GM12878 (cell line): ENCODE measurements at regions of chr11 and their contacts with region 1.

Region 1: DNA sequence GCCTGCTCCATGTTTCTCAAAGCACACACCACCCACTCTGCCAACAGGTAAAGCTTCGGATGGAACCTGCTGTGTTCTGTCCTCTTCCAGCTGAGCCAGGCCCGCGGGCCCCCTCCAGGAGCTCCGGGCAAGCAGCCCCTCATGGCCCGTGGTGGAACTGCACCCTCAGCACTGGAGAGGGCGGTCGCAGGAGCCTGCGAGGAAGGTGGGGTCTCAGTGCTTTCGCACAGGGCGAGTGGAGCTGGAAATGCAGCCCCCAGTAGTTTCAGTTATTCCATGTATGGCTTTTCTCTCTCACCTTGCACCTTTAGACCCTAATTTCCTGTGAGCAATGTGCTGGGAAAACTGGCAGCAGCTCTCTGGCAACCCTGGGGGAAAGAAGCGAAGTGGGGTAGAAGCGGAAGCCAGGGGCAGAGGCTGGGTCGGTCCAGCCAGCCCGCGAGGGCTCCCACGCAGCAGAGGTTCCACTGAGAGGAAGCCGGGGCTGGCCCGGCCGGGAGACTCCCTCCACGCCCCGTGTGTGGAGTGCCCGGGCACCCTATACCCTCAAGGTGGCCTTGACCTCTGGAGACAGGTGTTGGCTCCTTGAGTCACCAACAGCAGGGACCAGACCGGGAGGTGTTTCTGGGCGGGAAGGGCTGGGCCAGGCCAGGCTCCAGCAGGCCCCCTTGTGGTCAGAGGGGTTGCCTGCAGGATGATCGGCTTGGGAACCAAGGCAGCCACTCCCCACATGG is 119.9 kb upstream of the TMEM45B start:
- DNase-seq: no peak
- ATAC-seq: peak; percentile 92
- H3K4me3 ChIP-seq: no peak overlapping the region
- H3K27ac ChIP-seq: no peak overlapping the region
- H3K4me1 ChIP-seq: 0 out of 2 replicates have a peak, but pooled peaks cover 2% of the 10 kb centered on the region
- H3K27me3 ChIP-seq: no peaks in the 10 kb centered on the region
- CTCF ChIP-seq: peak; percentile 50 to 77 (median 61)
- EP300 ChIP-seq: no peak
- POLR2A ChIP-seq: no peak
- RAD21 ChIP-seq: peak; percentile 36

Region 2: DNA sequence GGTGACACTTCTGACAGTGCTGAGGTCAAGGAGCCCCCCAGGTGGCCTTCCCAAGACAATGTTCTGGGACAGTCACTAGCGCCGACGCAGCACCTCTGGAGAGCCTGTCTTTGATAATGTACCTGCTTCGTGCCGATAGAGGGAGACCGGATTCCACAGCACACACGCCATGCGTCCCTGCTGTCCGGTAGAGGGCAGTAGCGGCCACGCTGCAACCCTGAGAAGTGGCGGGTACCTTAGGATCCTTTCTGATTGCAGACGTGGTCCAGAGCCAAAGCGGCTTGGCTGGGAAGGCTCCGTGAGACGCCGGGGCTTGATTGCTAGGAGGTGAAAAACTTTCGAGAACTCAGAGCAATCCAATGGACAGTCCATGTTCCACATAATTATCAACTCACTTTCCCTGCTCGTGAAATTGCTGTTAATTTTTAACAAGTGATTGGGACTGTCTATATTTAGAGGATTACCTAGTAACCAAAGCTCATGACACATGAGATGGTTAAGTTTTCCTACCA is 331.5 kb before region 1 on chr11:
- CTCF ChIA-PET with region 1: interaction called, 8 read pairs
- POLR2A ChIA-PET with region 1: no interaction called
- RAD21 ChIA-PET with region 1: interaction called, 3 read pairs
- SMC1A ChIA-PET with region 1: no interaction called
- in situ Hi-C with region 1: no loop called
- intact Hi-C with region 1: loop called (anchors 1 kb)
- DNase-seq: peak; percentile 45
- ATAC-seq: peak; percentile 100
- H3K4me3 ChIP-seq: no peak overlapping the region
- H3K27ac ChIP-seq: no peak overlapping the region
- H3K4me1 ChIP-seq: no peaks in the 10 kb centered on the region
- H3K27me3 ChIP-seq: peaks cover 0 to 1% of the 10 kb centered on the region in 2 experiments; a peak in 1 of 4 replicates
- CTCF ChIP-seq: peak; percentile 100; a peak in 5 of 6 replicates
- EP300 ChIP-seq: no peak
- POLR2A ChIP-seq: no peak
- RAD21 ChIP-seq: peak; percentile 96

Region 3: GRCh38 chr11:129375751-129376657 is 319.7 kb before region 1 on chr11 and contains the start of gene BARX2:
- CTCF ChIA-PET with region 1: interaction called, 5 read pairs
- POLR2A ChIA-PET with region 1: no interaction called
- RAD21 ChIA-PET with region 1: no interaction called
- SMC1A ChIA-PET with region 1: no interaction called
- in situ Hi-C with region 1: no loop called
- intact Hi-C with region 1: loop called (anchors 5 kb)
- DNase-seq: no peak
- ATAC-seq: peak; percentile 43; the same call in 2 of the 3 replicates
- H3K4me3 ChIP-seq: no peak within 1 kb of the TSS
- H3K27ac ChIP-seq: no peak within 1 kb of the TSS
- H3K4me1 ChIP-seq: no peaks in the 10 kb centered on the region
- H3K27me3 ChIP-seq: peaks cover 14 to 26% of the 10 kb centered on the region in 2 experiments
- CTCF ChIP-seq: peak; percentile 12 to 40 (median 16); a peak in 3 of 6 replicates
- EP300 ChIP-seq: no peak
- POLR2A ChIP-seq: no peak
- RAD21 ChIP-seq: peak; percentile 36
- polyA plus RNA-seq, gene BARX2: not detected

Region 4: DNA sequence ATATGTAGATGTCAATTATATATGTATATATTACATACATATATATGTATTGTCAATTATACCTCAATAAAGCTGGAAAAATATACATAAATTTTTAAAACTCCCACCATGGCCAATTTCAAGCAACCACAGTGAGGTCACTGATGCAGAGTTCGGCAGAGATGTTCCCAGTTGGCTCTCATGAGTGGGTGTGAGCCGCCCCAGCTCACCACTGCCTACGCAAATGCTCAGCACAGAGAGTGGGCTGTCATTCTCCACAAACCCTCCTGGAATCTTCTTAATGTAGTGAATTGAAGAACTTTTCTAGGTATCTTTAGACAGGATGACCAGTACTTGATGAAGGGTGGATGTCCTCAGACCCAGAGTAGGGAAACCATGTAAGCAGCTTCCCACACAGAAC is 23.3 kb after region 1 on chr11:
- CTCF ChIA-PET with region 1: no interaction called
- POLR2A ChIA-PET with region 1: no interaction called
- RAD21 ChIA-PET with region 1: no interaction called
- SMC1A ChIA-PET with region 1: no interaction called
- in situ Hi-C with region 1: no loop called
- intact Hi-C with region 1: no loop called
- DNase-seq: no peak
- ATAC-seq: no peak
- H3K4me3 ChIP-seq: no peak overlapping the region
- H3K27ac ChIP-seq: no peak overlapping the region
- H3K4me1 ChIP-seq: no peaks in the 10 kb centered on the region
- H3K27me3 ChIP-seq: no peaks in the 10 kb centered on the region; a peak in 1 of 4 replicates
- CTCF ChIP-seq: no peak
- EP300 ChIP-seq: no peak
- POLR2A ChIP-seq: no peak
- RAD21 ChIP-seq: no peak